ENCODE measurements at regions of chr1 and their contacts with region 1.

Region 1: GRCh38 chr1:11198851-11199594 is 9.9 kb downstream of the ANGPTL7 start:
- DNase-seq: no peak
- ATAC-seq: no peak
- H3K4me3 ChIP-seq: no peak overlapping the region
- H3K27ac ChIP-seq: no peak overlapping the region
- H3K4me1 ChIP-seq: peaks cover 8% of the 10 kb centered on the region; the same call in 1 of the 2 replicates
- H3K27me3 ChIP-seq: no peaks in the 10 kb centered on the region
- CTCF ChIP-seq: no peak

Region 2: GRCh38 chr1:11114966-11115365 is 84.1 kb before region 1 on chr1:
- CTCF ChIA-PET with region 1: no interaction called
- POLR2A ChIA-PET with region 1: no interaction called
- intact Hi-C with region 1: loop called (anchors 10 kb)
- DNase-seq: no peak
- ATAC-seq: no peak
- H3K4me3 ChIP-seq: no peak overlapping the region
- H3K27ac ChIP-seq: no peak overlapping the region
- H3K4me1 ChIP-seq: no peaks in the 10 kb centered on the region
- H3K27me3 ChIP-seq: no peaks in the 10 kb centered on the region
- CTCF ChIP-seq: no peak

Measured in PC-3 (cell line).